Right ventricle myocardium inferior (tissue), 1 donor: ENCODE measurements at regions of chr2 and their contacts with region 1.

Region 1: DNA sequence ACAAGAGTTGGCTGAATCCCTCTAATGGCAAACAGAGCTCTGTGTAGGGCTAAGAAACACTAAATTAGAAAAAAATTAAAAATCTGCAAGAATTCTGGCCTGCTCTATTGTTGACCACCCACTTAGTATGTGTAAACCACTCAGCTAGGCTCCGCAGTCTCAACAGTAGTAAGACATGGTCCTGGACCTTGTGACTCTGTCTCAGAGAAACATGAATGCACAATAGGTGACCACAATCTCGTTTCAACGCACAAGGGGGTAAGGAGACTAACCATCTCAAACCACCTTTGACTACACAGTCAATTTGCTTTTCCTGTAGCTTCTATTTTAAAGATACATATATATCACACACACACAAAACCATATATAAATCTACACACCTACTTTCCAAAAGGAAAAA is 16.5 kb downstream of the SEPTIN10 start:
- DNase-seq: no peak
- ATAC-seq: no peak

Region 2: GRCh38 chr2:109560265-109560664 is 37.0 kb before region 1 on chr2:
- intact Hi-C with region 1: loop called (anchors 5 kb)
- DNase-seq: no peak
- ATAC-seq: no peak